Breast epithelium (tissue), 4 donors: ENCODE measurements at regions of chr18 and their contacts with region 1.

Region 1: DNA sequence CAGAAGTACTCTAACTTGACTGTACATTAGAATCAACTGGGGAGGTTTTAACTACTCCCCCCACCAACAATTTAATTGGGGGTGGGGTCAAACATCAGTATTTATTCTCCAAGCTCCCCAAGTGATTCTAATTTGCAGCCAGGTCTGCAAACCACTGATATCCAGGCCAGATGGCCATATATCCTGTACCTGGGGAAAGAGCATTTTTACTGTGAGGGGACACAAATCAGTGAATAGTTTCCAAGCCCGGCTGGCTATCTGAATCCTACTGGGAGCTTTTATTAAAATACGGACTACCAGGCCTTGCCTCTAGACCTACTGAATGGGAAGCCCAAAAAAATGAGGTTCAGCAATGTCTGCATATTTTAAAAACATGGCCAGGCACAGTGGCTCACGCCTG is 88.5 kb downstream of the TCF4 start:
- DNase-seq: no peak
- H3K4me3 ChIP-seq: no peak overlapping the region
- H3K27ac ChIP-seq: peak overlapping the region in 1 of 2 donors; percentile 1
- H3K4me1 ChIP-seq: no peaks in the 10 kb centered on the region
- H3K27me3 ChIP-seq: no peaks in the 10 kb centered on the region
- CTCF ChIP-seq: no peak
- POLR2A ChIP-seq: no peak

Region 2: GRCh38 chr18:55307505-55307904 is 192.0 kb before region 1 on chr18:
- intact Hi-C with region 1: no loop called
- DNase-seq: no peak
- H3K4me3 ChIP-seq: no peak overlapping the region
- H3K27ac ChIP-seq: no peak overlapping the region
- H3K4me1 ChIP-seq: no peaks in the 10 kb centered on the region
- H3K27me3 ChIP-seq: no peaks in the 10 kb centered on the region
- CTCF ChIP-seq: no peak
- POLR2A ChIP-seq: no peak

Region 3: GRCh38 chr18:55485666-55486065 is 13.9 kb before region 1 on chr18:
- intact Hi-C with region 1: loop called (anchors 1 kb)
- DNase-seq: no peak
- H3K4me3 ChIP-seq: no peak overlapping the region
- H3K27ac ChIP-seq: no peak overlapping the region
- H3K4me1 ChIP-seq: no peaks in the 10 kb centered on the region
- H3K27me3 ChIP-seq: no peaks in the 10 kb centered on the region
- CTCF ChIP-seq: no peak
- POLR2A ChIP-seq: no peak